A549 (cell line): ENCODE measurements at regions of chr17 and their contacts with region 1.

Region 1: DNA sequence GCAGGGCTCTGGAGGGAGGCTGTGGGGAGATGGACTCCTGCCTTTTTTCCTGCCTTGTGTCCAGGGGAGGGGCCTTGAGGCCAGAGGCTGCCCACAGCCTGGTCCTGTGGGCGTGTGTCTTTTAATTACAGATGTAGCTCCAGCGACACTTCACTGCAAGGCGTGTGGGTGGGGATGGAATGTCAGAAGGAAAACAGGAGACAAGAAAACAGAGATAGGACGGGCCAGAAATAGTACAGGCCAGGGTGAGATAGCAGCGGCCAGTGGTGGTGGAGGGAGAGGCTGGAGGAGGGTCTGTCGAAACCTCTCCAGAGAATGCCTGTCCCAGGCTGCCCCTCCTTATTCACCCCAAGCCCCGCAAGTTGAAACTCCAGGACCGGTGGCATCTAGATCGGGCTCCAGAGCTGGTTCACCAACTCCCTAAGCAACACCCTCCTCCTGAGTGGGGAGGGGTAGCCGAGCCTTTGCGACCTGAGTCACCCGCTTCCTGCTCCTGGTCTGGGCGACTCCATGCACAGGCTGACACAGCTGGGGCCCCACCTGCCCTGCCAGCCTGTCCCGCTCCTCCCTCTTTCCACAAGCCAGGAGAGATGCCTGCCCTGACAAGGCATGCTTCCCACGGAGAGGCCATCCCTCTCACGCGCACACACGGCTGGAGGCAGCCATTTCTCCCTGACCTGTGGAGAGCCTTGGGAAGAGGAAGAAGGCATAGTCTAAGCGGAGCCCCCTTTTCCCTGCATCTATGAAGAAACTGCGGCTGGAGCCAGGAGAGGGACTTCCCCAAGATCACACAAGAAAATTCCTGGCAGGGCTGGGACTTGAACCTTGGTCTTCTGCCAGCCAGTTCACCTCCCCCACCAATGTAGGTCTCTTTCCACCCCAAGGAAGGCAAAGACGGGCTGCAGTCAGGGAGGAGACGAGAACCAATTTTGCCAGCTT is 6.6 kb upstream of the JUP start:
- DNase-seq: peak; percentile 68 to 93
- ATAC-seq: peak; percentile 86 to 89
- H3K4me3 ChIP-seq: peak overlapping the region; percentile 20
- H3K27ac ChIP-seq: peak overlapping the region; percentile 86 to 92
- H3K4me1 ChIP-seq: peaks cover 49% of the 10 kb centered on the region
- CTCF ChIP-seq: no peak
- EP300 ChIP-seq: no peak
- POLR2A ChIP-seq: peak; percentile 33
- RAD21 ChIP-seq: no peak

Region 2: GRCh38 chr17:41777574-41778188 is 15.4 kb before region 1 on chr17:
- CTCF ChIA-PET with region 1: interaction called, 3,262 read pairs
- POLR2A ChIA-PET with region 1: interaction called, 18 read pairs
- DNase-seq: peak; percentile 93 to 98
- ATAC-seq: peak; percentile 81
- H3K4me3 ChIP-seq: peak overlapping the region; percentile 8; the same call in 1 of the 3 replicates
- H3K27ac ChIP-seq: peak overlapping the region; percentile 89 to 93
- H3K4me1 ChIP-seq: peaks cover 90% of the 10 kb centered on the region
- CTCF ChIP-seq: no peak
- EP300 ChIP-seq: peak; percentile 86 to 90; a peak in 4 of 5 replicates
- POLR2A ChIP-seq: peak; percentile 25; the same call in 1 of the 2 replicates
- RAD21 ChIP-seq: no peak; a peak in 1 of 5 replicates

Region 3: GRCh38 chr17:41860254-41860931 is 67.3 kb after region 1 on chr17:
- CTCF ChIA-PET with region 1: no interaction called
- POLR2A ChIA-PET with region 1: no interaction called
- DNase-seq: no peak
- ATAC-seq: no peak
- H3K4me3 ChIP-seq: no peak overlapping the region
- H3K27ac ChIP-seq: no peak overlapping the region
- H3K4me1 ChIP-seq: peaks cover 40% of the 10 kb centered on the region
- CTCF ChIP-seq: no peak
- EP300 ChIP-seq: no peak
- POLR2A ChIP-seq: no peak
- RAD21 ChIP-seq: no peak

Region 4: DNA sequence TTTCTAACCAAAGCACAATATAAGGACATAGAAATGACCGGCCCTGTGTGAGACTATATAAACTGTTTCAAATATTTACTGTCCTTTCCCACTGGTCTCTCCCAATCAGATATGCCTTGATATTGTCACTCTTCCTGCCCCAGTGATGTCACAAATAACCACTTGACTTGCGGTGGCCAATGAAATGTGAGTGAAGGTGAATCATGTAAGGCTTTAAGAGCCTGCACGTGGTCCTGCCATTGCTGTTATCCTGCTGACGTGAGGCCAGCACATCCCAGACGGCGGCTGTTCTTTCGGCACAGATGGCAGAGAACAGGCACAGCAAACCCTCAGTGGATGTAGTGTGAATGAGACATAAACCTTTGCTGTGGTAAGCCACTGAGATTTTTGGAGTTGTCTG is 77.5 kb after region 1 on chr17:
- CTCF ChIA-PET with region 1: no interaction called
- POLR2A ChIA-PET with region 1: no interaction called
- DNase-seq: peak in 1 of 2 experiments; percentile 44
- ATAC-seq: peak; percentile 19 to 44; a peak in 5 of 6 replicates
- H3K4me3 ChIP-seq: no peak overlapping the region
- H3K27ac ChIP-seq: no peak overlapping the region
- H3K4me1 ChIP-seq: peaks cover 11% of the 10 kb centered on the region; the same call in 2 of the 3 replicates
- CTCF ChIP-seq: no peak
- EP300 ChIP-seq: no peak
- POLR2A ChIP-seq: no peak
- RAD21 ChIP-seq: no peak

Region 5: GRCh38 chr17:41918314-41919164 is 125.4 kb after region 1 on chr17 and contains the start of gene ACLY:
- CTCF ChIA-PET with region 1: no interaction called
- POLR2A ChIA-PET with region 1: no interaction called
- DNase-seq: peak; percentile 98
- ATAC-seq: peak; percentile 39 to 93
- H3K4me3 ChIP-seq: peak within 1 kb of the TSS; percentile 94
- H3K27ac ChIP-seq: peak within 1 kb of the TSS; percentile 93 to 95
- H3K4me1 ChIP-seq: peaks cover 52% of the 10 kb centered on the region
- CTCF ChIP-seq: no peak
- EP300 ChIP-seq: no peak
- POLR2A ChIP-seq: peak; percentile 97
- RAD21 ChIP-seq: 0 out of 5 replicates have a peak, but pooled peaks of 1 of the 2 experiments have one; percentile 33
- polyA plus RNA-seq, gene ACLY: 367 and 376 TPM in 2 replicates

Region 6: DNA sequence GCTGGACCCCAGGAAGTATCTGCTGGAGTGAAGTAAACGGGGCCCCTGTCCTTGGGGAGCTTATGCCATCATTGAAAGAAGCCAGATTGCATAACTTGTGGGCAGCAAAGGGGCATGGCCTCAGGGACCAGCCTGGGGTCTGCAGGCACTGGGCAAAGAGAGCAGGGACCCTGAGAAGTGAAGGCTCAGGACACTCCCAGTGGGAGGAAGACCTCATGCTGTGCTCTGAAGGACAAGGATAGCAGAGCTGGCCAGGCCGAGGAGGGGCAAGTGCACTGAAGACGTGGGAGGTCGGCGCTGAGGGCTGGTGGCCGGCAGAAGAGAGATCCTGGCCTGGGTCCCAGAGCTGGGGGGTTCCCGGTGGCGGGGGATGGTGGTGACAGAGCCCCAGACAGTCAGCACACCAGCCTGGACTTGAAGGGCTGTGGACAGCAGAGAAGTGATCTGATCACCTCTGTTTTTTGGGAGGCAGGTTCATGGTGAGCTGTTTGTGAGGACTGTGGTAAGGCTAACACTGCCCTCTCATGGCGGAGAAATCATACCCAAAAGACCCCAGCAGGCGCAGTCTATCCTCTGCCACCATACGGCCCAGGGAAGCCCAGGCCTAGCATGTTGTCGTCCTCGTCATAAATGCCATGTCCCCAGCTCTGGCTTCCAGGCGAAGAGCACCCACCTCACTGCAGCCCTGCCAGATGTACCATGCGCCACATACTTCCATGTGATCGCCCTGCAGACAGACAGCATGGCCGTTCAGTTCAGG is 166.4 kb after region 1 on chr17:
- CTCF ChIA-PET with region 1: interaction called, 10 read pairs
- POLR2A ChIA-PET with region 1: no interaction called
- DNase-seq: peak; percentile 76 to 82
- ATAC-seq: peak; percentile 79 to 89
- H3K4me3 ChIP-seq: no peak overlapping the region
- H3K27ac ChIP-seq: peak overlapping the region in 1 of 2 experiments; percentile 72; a peak in 3 of 6 replicates
- H3K4me1 ChIP-seq: peaks cover 7% of the 10 kb centered on the region; the same call in 2 of the 3 replicates
- CTCF ChIP-seq: peak; percentile 84
- EP300 ChIP-seq: no peak
- POLR2A ChIP-seq: no peak
- RAD21 ChIP-seq: peak; percentile 88 to 94